Mucosa of descending colon (tissue), 3 donors: ENCODE measurements at regions of chr14 and their contacts with region 1.

Region 1: GRCh38 chr14:38721822-38722431 is 381.1 kb downstream of the SEC23A start:
- DNase-seq: peak in 2 of 3 donors; percentile 65 to 93
- ATAC-seq: peak; percentile 97
- H3K4me3 ChIP-seq: no peak overlapping the region
- H3K4me1 ChIP-seq: no peaks in the 10 kb centered on the region
- CTCF ChIP-seq: peak; percentile 58

Region 2: DNA sequence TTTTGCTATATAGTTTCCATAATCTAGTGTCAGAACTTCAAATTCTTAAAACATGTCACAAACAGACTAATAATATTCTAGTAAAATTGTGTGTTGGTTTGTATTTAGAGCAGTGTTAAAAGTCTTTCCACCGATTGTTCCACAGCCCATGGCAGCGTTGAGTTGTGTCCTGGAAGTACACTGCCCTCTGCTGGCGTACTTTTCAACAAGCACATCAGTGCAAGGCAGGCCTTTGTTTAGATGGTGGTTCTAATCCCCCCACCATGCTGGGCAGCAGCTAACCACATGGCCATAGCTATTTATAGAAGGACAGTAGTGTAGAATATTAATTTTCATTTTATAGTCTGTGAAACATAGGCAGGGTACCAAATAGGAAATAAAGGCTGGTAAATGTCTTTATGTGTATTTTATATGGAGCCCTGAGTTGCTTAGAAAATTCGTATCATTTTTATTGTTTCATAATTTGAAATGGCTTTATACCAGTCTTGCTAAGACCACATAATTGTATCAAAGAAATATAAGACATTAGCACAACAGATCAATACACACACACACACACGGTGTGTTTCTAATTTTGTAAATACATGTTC is 145.7 kb after region 1 on chr14:
- intact Hi-C with region 1: loop called in 1 of 2 experiments (anchors 2 kb)
- DNase-seq: peak in 2 of 3 donors; percentile 56 to 94
- ATAC-seq: peak; percentile 87
- H3K4me3 ChIP-seq: no peak overlapping the region
- H3K4me1 ChIP-seq: peaks cover 12% of the 10 kb centered on the region
- CTCF ChIP-seq: peak; percentile 53